OCI-LY7 (cell line): ENCODE measurements at regions of chr3 and their contacts with region 1.

Region 1: GRCh38 chr3:149245738-149246451 is 24.3 kb upstream of the CP start:
- DNase-seq: peak; percentile 76
- H3K4me3 ChIP-seq: peak overlapping the region; percentile 47
- H3K27ac ChIP-seq: peak overlapping the region; percentile 62
- H3K4me1 ChIP-seq: peaks cover 72% of the 10 kb centered on the region
- CTCF ChIP-seq: no peak

Region 2: GRCh38 chr3:149180057-149180573 is 65.8 kb before region 1 on chr3:
- CTCF ChIA-PET with region 1: no interaction called
- POLR2A ChIA-PET with region 1: no interaction called
- intact Hi-C with region 1: no loop called
- DNase-seq: no peak
- H3K4me3 ChIP-seq: no peak overlapping the region
- H3K27ac ChIP-seq: no peak overlapping the region
- H3K4me1 ChIP-seq: no peaks in the 10 kb centered on the region
- CTCF ChIP-seq: no peak

Region 3: DNA sequence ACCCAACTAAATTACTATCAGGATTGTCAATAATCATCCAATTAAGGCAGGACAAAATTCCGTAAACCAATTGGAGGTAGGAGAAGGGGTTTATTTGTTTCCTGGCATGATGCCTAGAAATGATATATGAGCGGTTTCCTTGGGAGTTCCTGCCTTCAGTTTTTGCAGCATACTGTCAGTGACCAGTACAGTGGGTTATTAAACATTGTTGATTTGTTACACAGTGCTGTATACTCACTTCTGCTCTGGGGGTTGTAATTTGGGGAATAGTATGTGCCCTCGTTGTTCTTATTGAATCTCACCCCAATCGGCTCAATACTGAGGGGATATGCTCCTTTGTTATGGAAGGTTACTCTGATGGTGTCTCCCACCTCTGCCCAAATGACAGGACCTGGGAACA is 46.4 kb before region 1 on chr3:
- CTCF ChIA-PET with region 1: no interaction called
- POLR2A ChIA-PET with region 1: no interaction called
- intact Hi-C with region 1: no loop called
- DNase-seq: no peak
- H3K4me3 ChIP-seq: no peak overlapping the region
- H3K27ac ChIP-seq: no peak overlapping the region
- H3K4me1 ChIP-seq: peaks cover 13% of the 10 kb centered on the region
- CTCF ChIP-seq: no peak

Region 4: GRCh38 chr3:149234671-149235245 is 11.1 kb before region 1 on chr3:
- CTCF ChIA-PET with region 1: interaction called, 5 read pairs
- POLR2A ChIA-PET with region 1: interaction called, 17 read pairs
- intact Hi-C with region 1: no loop called
- DNase-seq: no peak
- H3K4me3 ChIP-seq: no peak overlapping the region
- H3K27ac ChIP-seq: no peak overlapping the region
- H3K4me1 ChIP-seq: no peaks in the 10 kb centered on the region
- CTCF ChIP-seq: no peak

Region 5: DNA sequence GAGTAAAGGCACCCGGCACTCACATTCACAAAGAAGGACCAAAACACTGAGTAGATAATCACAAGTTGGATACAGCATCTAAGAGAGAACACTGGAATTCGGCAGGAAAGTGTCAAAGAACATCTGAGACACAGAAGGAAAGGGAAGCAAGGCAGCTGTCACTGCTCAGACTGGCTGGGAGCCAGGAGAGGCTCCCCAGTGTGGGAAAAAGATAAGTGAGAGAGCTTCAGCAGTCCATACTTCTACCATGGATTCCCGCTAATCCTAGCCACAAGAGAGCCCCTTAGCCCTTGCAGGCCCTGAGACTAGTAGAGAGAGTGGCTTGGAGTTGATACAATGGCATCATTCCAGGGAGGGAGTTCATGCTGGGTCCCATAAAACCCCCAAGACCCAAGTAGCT is 12.4 kb after region 1 on chr3:
- CTCF ChIA-PET with region 1: no interaction called
- POLR2A ChIA-PET with region 1: interaction called, 10 read pairs
- intact Hi-C with region 1: no loop called
- DNase-seq: no peak
- H3K4me3 ChIP-seq: no peak overlapping the region
- H3K27ac ChIP-seq: no peak overlapping the region
- H3K4me1 ChIP-seq: peaks cover 4% of the 10 kb centered on the region
- CTCF ChIP-seq: no peak

Region 6: GRCh38 chr3:149267565-149267964 is 21.7 kb after region 1 on chr3:
- CTCF ChIA-PET with region 1: no interaction called
- POLR2A ChIA-PET with region 1: interaction called, 6 read pairs
- intact Hi-C with region 1: loop called (anchors 2 kb)
- DNase-seq: peak; percentile 43
- H3K4me3 ChIP-seq: no peak overlapping the region
- H3K27ac ChIP-seq: no peak overlapping the region
- H3K4me1 ChIP-seq: peaks cover 24% of the 10 kb centered on the region
- CTCF ChIP-seq: no peak